ENCODE measurements at regions of chr19 and their contacts with region 1.

Region 1: DNA sequence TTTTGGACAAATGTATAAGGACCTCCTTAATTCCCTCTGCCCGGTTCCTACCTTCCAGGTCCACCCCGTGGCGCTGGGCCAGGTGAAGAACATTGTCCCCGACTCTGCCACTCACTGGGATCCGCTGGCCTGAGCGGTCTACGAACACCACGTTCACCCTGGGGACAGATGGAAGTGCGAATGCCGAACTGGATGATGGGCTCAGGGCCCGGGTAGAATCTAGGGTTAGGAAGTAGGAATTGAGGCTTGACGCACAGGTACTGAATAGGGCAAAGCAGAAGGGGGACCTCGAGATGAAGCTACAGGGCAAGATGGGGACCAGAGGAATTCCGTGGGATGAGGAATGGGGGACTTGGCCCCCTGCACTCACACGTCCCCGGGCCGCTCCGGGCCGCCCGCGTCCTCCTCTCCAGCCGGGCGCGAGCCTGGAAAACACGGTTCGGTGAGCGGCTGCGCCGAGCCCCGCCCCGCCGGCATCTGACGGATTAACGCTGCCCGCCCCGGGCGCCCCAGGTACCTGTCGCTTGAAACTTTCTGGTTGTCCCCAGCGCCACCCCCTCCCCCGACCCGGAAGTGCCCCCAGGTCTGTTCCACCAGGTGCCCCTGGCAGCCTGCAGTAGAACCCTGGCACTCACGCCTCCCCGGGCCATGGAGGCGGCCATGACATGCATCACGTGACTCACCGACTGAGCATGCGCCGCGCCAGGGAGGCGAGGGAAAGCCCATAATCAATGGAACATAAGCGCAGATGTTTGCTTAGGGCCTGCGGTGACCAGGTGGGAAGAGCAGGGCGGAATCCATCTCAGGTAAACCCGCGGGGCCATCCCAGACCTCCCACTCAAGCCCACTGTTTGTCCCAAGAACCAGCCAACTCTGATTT is at the start of gene FDX2:
- DNase-seq: peak; percentile 67
- ATAC-seq: peak; percentile 93
- H3K4me3 ChIP-seq: peak within 1 kb of the TSS; percentile 58
- H3K27ac ChIP-seq: peak within 1 kb of the TSS; percentile 45
- H3K4me1 ChIP-seq: no peaks in the 10 kb centered on the region
- H3K27me3 ChIP-seq: no peaks in the 10 kb centered on the region
- CTCF ChIP-seq: no peak
- POLR2A ChIP-seq: no peak
- RAD21 ChIP-seq: no peak
- total RNA-seq, gene FDX2: 39.8 and 40.8 TPM in 2 replicates

Region 2: GRCh38 chr19:10260141-10260584 is 55.4 kb before region 1 on chr19:
- CTCF ChIA-PET with region 1: no interaction called
- POLR2A ChIA-PET with region 1: no interaction called
- dilution Hi-C with region 1: no loop called
- in situ Hi-C with region 1: no loop called
- intact Hi-C with region 1: no loop called
- DNase-seq: no peak
- ATAC-seq: no peak
- H3K4me3 ChIP-seq: no peak overlapping the region
- H3K27ac ChIP-seq: no peak overlapping the region
- H3K4me1 ChIP-seq: no peaks in the 10 kb centered on the region
- H3K27me3 ChIP-seq: no peaks in the 10 kb centered on the region
- CTCF ChIP-seq: no peak
- POLR2A ChIP-seq: no peak
- RAD21 ChIP-seq: no peak

Region 3: DNA sequence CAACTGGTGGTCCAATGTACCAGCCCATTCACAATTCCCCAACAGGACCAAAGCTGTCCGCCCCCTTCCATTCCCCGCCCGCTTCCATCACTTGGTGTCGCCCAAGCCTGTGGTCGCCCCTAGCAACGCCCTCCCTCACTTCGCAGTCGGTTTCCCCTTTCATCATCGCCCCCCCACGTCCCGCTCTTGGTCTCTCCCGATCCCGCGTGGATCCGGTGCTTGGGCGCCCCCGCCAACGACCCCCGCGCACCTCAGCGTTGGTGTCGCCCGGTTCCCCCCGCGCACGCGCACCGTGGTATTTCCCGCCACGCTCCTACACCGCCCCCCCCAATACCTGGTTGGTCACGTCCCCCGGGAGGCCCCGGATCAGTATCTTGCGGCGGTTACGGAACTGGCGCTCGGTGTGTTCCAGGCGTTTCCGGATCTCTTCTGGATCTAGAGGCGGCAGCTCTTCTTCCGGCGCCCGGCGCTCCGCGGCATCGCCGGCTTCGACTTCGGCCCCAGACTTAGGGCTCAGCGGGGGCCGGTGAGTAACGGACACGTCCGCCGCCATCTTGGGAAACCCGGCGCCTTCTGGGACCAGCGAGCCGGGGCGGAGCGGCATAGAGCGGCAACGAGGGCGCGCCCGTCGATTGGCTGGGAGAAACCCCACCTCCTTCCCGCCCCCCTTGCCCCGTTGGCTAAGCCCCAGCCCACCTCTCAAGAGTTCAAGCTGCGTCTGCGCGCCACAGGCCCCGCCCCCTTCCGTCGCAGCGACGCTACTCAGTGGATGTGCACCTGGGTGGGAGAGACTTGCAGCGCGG is 17.6 kb after region 1 on chr19 and contains the start of gene RAVER1:
- CTCF ChIA-PET with region 1: no interaction called
- POLR2A ChIA-PET with region 1: no interaction called
- dilution Hi-C with region 1: no loop called
- in situ Hi-C with region 1: no loop called
- intact Hi-C with region 1: loop called (anchors 1 kb)
- DNase-seq: peak; percentile 97
- ATAC-seq: peak; percentile 89
- H3K4me3 ChIP-seq: peak within 1 kb of the TSS; percentile 75
- H3K27ac ChIP-seq: peak within 1 kb of the TSS; percentile 86
- H3K4me1 ChIP-seq: peaks cover 5% of the 10 kb centered on the region; the same call in 1 of the 2 replicates
- H3K27me3 ChIP-seq: no peaks in the 10 kb centered on the region
- CTCF ChIP-seq: no peak
- POLR2A ChIP-seq: peak; percentile 96
- RAD21 ChIP-seq: no peak
- total RNA-seq, gene RAVER1: 2.5 and 2.7 TPM in 2 replicates

Measured in IMR-90 (cell line).